ENCODE measurements at regions of chr15 and their contacts with region 1.

Region 1: GRCh38 chr15:25568751-25569150 is 129.9 kb upstream of the UBE3A start:
- DNase-seq: peak; percentile 60 to 81
- ATAC-seq: peak; percentile 77
- H3K4me3 ChIP-seq: no peak overlapping the region
- H3K27ac ChIP-seq: peak overlapping the region; percentile 73 to 97
- H3K4me1 ChIP-seq: peaks cover 12 to 22% of the 10 kb centered on the region in 2 donors
- H3K27me3 ChIP-seq: no peaks in the 10 kb centered on the region

Region 2: GRCh38 chr15:25527118-25527517 is 41.6 kb before region 1 on chr15:
- intact Hi-C with region 1: no loop called
- DNase-seq: no peak
- ATAC-seq: no peak
- H3K4me3 ChIP-seq: no peak overlapping the region
- H3K27ac ChIP-seq: no peak overlapping the region
- H3K4me1 ChIP-seq: no peaks in the 10 kb centered on the region
- H3K27me3 ChIP-seq: no peaks in the 10 kb centered on the region

Region 3: GRCh38 chr15:25596644-25597562 is 28.2 kb after region 1 on chr15:
- intact Hi-C with region 1: loop called in 1 of 2 experiments (anchors 5 kb)
- DNase-seq: no peak
- ATAC-seq: peak; percentile 67
- H3K4me3 ChIP-seq: no peak overlapping the region
- H3K27ac ChIP-seq: peak overlapping the region; percentile 4 to 76
- H3K4me1 ChIP-seq: peaks cover 0 to 2% of the 10 kb centered on the region in 2 donors
- H3K27me3 ChIP-seq: no peaks in the 10 kb centered on the region

Region 4: DNA sequence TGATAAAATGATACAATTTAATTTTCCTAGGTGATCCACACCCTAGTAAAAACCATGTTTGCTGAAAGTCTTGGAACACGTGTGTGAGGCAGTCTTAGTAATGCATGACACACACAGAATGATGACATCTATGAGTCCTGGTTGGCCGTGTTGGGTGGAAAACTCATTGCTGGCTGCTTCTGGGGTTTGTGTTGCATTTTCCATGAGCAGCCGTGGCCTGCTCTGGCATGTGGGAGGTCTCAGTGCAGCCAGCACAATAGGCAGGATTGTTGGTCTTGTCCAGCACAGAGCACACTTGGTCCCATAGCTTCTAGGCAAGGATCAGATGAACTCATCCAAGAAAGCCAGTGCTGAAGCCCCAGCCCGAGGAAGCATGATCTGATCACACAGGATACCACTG is 42.9 kb after region 1 on chr15:
- intact Hi-C with region 1: loop called in 1 of 2 experiments (anchors 5 kb)
- DNase-seq: peak in 1 of 2 donors; percentile 67
- ATAC-seq: peak; percentile 73
- H3K4me3 ChIP-seq: no peak overlapping the region
- H3K27ac ChIP-seq: peak overlapping the region in 1 of 2 donors; percentile 38
- H3K4me1 ChIP-seq: peaks cover 0 to 2% of the 10 kb centered on the region in 2 donors
- H3K27me3 ChIP-seq: no peaks in the 10 kb centered on the region

Region 5: DNA sequence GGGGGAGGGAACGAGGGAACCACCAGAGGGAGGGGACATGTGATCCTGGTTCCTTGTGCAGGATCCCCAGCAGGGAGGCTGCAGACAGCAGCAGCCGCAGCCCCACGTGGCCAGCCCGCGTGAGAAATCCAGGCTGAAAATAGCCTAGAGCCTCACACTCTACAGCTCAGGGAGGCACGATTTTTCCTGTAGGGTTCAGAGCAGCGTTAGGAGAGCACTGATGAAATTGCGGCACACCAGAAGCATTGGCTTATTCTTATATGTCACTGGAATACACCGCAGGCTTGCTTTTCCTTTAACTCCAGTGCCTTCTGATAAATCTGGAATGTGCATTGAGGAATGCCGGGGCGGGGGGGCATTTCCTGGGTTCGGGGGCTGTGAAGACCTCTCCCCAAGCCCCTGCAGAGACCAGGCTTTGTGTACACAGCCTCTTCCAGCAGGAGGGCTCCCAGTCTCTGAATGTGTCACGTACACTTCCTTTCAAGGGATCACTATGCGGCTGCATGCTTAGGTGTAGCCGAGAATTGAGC is 101.3 kb after region 1 on chr15:
- intact Hi-C with region 1: loop called in 1 of 2 experiments (anchors 5 kb)
- DNase-seq: peak; percentile 85 to 91
- ATAC-seq: peak; percentile 85
- H3K4me3 ChIP-seq: no peak overlapping the region
- H3K27ac ChIP-seq: peak overlapping the region; percentile 29 to 73
- H3K4me1 ChIP-seq: peaks cover 3 to 5% of the 10 kb centered on the region in 2 donors
- H3K27me3 ChIP-seq: no peaks in the 10 kb centered on the region

Measured in aorta (tissue), 5 donors.